Activated B cell treated with CpG ODN at 0.5 μM for 24 hours (primary cell): ENCODE measurements at regions of chr2 and their contacts with region 1.

Region 1: GRCh38 chr2:227903381-227903780 is 31.9 kb downstream of the DAW1 start:
- DNase-seq: no peak
- ATAC-seq: no peak
- H3K4me3 Mint-ChIP-seq: no peak overlapping the region
- H3K27ac Mint-ChIP-seq: no peak overlapping the region
- H3K4me1 Mint-ChIP-seq: no peaks in the 10 kb centered on the region
- H3K27me3 Mint-ChIP-seq: peaks cover 2% of the 10 kb centered on the region
- CTCF ChIP-seq: no peak

Region 2: DNA sequence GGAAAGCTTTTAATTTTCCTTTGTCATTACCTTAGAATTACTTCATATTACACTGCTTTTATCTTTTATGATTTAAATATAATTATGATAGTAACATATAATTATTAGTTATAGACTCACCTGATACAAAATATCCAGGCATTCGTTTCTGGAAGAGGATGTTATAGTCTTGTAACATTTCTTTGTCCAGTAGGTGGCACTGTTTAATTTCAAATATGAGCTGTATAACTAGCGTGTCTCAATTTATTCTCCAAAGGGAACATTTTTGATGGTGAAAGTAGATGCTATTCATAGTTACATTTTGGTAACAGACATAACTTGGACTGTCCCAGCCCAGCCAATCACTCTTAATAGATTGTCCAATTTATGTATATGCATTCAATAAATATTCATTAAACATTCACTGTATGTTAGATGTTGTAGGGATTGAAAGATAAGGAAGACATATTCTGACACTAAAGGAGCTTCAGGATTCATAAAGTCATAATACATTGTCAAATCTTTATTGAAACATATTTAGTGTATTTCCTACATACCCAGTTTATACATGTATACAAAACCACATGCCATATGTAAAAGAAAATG is 12.8 kb before region 1 on chr2:
- CTCF ChIA-PET with region 1: interaction called, 10 read pairs
- POLR2A ChIA-PET with region 1: no interaction called
- intact Hi-C with region 1: no loop called
- DNase-seq: no peak
- ATAC-seq: no peak
- H3K4me3 Mint-ChIP-seq: no peak overlapping the region
- H3K27ac Mint-ChIP-seq: no peak overlapping the region
- H3K4me1 Mint-ChIP-seq: no peaks in the 10 kb centered on the region
- H3K27me3 Mint-ChIP-seq: peaks cover 5% of the 10 kb centered on the region
- CTCF ChIP-seq: peak; percentile 58

Region 3: DNA sequence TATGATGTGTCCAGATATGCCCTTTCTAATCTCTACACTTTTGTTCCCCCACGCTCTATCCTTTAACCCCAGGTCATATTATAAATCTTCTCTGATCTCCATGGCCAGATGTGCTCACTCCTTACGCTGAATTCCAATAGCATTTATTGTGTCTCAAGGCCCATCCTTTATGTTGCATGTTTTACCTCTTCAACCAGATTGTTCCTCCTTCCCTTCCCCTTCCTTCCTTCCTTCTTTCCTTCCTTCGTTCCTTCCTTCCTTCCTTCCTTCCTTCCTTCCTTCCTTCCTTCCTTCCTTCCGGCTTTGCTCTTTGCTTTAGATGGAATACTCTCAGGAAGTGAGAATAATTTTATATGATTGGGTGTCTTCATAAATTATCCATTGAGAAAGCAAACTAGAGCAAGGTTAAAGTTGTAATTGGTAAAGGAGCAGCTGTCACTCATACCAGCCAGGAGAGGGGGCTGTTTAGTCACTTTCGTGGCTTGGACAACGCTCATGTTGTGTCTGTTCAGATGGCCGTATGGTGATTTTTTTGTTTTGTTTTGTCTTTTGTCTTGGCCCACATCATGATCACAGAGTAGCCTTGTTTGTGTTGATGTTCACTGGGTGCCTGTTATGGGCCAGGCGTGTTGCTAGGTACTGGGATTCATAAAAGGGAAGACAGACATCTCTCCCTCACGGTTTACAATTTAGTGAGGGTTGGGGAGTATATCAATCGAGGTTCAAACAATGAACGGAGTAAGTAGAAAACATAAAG is 36.1 kb after region 1 on chr2:
- CTCF ChIA-PET with region 1: no interaction called
- POLR2A ChIA-PET with region 1: no interaction called
- intact Hi-C with region 1: no loop called
- DNase-seq: no peak
- ATAC-seq: no peak
- H3K4me3 Mint-ChIP-seq: no peak overlapping the region
- H3K27ac Mint-ChIP-seq: no peak overlapping the region
- H3K4me1 Mint-ChIP-seq: no peaks in the 10 kb centered on the region
- H3K27me3 Mint-ChIP-seq: peaks cover 5% of the 10 kb centered on the region
- CTCF ChIP-seq: no peak